Activated CD8-positive, alpha-beta T cell treated with anti-CD3 and anti-CD28 coated beads, Interleukin-2, amount 10 ng/mL, durations not matched to agents 7 days and 5 days (primary cell): ENCODE measurements at regions of chr16 and their contacts with region 1.

Region 1: DNA sequence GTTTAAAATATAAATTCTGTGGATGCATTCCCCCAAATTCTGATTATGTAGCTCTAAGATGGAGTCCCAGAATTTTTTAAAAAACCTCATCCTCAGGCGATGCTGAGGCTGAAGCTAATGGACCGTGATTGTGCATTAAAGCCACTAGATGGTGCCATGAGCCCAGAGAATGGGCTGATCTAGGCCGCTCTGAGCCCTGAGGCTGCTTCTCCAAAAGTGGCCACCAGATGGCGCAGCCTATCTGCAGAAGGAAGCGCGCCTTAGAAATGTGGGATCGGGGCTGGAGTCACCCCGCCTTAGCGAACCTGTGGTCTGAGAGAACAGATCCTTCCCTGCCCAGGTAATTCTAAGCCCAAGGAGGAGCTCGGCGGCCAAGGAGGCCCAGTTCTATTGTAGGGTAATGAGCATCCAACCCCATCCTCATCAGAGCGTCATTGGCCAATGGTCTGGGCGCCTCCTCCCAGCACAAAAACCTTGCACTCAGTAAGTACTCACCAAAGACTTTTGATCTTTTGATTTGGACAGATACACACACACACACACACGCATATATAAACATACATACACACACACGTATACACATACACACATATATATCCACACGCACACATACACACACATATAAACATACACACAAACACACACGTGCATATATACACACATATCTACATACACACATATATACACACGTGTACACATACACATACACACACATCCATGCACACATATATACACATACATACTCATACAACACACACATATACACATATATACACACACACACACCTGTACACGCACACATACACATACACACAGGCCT is 13.7 kb upstream of the MMP2 start:
- DNase-seq: peak; percentile 89
- ATAC-seq: peak; percentile 97
- H3K4me3 Mint-ChIP-seq: no peak overlapping the region
- H3K27ac Mint-ChIP-seq: no peak overlapping the region
- H3K4me1 Mint-ChIP-seq: no peaks in the 10 kb centered on the region
- H3K27me3 Mint-ChIP-seq: no peaks in the 10 kb centered on the region

Region 2: GRCh38 chr16:55398762-55399161 is 66.5 kb before region 1 on chr16:
- CTCF ChIA-PET with region 1: no interaction called
- POLR2A ChIA-PET with region 1: no interaction called
- DNase-seq: no peak
- ATAC-seq: no peak
- H3K4me3 Mint-ChIP-seq: no peak overlapping the region
- H3K27ac Mint-ChIP-seq: no peak overlapping the region
- H3K4me1 Mint-ChIP-seq: no peaks in the 10 kb centered on the region
- H3K27me3 Mint-ChIP-seq: no peaks in the 10 kb centered on the region

Region 3: GRCh38 chr16:55411231-55411630 is 54.1 kb before region 1 on chr16:
- CTCF ChIA-PET with region 1: no interaction called
- POLR2A ChIA-PET with region 1: no interaction called
- DNase-seq: no peak
- ATAC-seq: no peak
- H3K4me3 Mint-ChIP-seq: no peak overlapping the region
- H3K27ac Mint-ChIP-seq: no peak overlapping the region
- H3K4me1 Mint-ChIP-seq: no peaks in the 10 kb centered on the region
- H3K27me3 Mint-ChIP-seq: peaks cover 2% of the 10 kb centered on the region

Region 4: DNA sequence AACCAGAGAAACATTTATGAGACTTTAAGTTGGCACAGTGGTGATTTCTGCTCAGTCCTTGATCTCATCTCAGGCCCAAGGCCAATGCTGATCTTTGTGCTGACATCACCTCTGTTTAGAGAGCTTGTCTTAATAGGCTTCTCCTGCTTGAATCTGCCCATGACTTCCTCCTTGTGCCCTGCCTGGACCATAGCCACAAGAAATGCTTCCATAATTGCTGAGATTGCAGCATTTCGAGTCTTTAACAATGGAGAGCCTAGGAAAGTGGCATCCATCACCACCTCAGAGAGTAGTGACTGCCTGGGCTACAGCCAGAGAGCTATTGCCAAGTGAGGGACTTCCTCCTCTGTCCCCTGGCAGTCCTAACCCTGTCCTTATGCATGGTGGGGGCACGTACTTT is 11.4 kb before region 1 on chr16:
- CTCF ChIA-PET with region 1: interaction called, 13 read pairs
- POLR2A ChIA-PET with region 1: no interaction called
- DNase-seq: no peak
- ATAC-seq: no peak
- H3K4me3 Mint-ChIP-seq: no peak overlapping the region
- H3K27ac Mint-ChIP-seq: no peak overlapping the region
- H3K4me1 Mint-ChIP-seq: no peaks in the 10 kb centered on the region
- H3K27me3 Mint-ChIP-seq: no peaks in the 10 kb centered on the region

Region 5: DNA sequence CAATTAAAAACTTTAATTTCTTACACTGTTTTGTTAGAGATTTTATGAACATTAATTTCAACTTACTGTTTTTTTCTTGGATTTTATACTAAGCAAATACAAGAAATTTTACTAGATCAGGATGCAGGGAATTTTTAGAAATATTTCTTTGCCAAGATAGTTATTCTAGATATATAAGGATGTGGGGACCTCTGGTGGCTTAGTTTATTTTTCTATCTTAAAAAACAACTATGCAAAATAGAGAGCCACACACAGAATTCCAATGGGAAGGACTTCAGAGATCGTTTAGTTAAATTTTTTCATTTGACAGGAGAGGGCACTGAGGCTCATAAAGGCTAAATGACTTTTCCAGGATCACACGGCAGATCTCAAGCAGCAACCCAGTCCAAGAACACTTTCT is 78.2 kb after region 1 on chr16:
- CTCF ChIA-PET with region 1: interaction called, 11 read pairs
- POLR2A ChIA-PET with region 1: no interaction called
- DNase-seq: no peak
- ATAC-seq: no peak
- H3K4me3 Mint-ChIP-seq: no peak overlapping the region
- H3K27ac Mint-ChIP-seq: no peak overlapping the region
- H3K4me1 Mint-ChIP-seq: no peaks in the 10 kb centered on the region
- H3K27me3 Mint-ChIP-seq: no peaks in the 10 kb centered on the region

Region 6: GRCh38 chr16:55695595-55695994 is 230.3 kb after region 1 on chr16:
- CTCF ChIA-PET with region 1: interaction called, 92 read pairs
- POLR2A ChIA-PET with region 1: no interaction called
- DNase-seq: no peak
- ATAC-seq: no peak
- H3K4me3 Mint-ChIP-seq: no peak overlapping the region
- H3K27ac Mint-ChIP-seq: no peak overlapping the region
- H3K4me1 Mint-ChIP-seq: no peaks in the 10 kb centered on the region
- H3K27me3 Mint-ChIP-seq: peaks cover 2% of the 10 kb centered on the region

Region 7: DNA sequence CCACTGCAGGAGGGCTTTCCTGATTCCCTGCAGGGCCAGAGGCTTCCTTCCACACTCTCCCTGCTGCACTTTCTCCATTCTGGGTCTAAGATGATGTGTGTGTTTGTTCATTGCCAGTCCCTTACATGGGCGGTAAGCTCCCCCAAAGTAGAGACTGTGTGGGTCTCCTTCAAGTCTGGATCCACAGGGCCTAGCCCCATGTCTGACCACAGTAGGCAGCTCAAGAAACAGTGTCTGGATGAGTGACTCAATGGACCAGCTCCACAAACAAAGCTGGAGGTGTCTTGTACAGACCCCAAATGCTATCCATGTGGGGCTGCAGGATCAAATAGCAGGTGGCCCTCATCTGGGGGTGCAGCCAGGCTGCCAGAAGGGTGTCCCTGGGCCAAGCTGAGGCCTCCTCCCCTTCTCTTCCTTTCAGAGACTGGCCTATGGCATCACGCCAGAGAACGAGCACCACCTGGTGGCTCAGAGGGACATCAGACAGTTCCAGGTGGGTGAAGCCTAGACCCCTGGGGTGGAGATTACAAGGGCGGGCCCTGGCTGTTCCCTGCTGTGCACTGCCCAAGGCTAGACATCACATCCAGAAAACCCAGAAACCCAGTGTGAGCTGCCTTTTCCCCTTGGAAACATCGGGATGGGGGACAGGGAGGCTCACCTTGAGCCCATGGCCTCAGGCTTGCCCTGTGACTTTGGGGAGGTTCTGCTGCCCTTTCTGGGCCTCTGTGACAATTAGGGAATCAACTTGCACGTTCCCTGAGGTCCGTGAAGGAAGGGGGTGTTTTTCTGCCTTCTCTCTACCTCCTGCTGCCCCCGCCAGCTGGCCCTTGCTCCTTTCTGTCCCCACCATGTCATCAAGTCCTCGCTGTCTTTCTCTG is 236.4 kb after region 1 on chr16:
- CTCF ChIA-PET with region 1: interaction called, 92 read pairs
- POLR2A ChIA-PET with region 1: no interaction called
- DNase-seq: peak; percentile 48
- ATAC-seq: peak; percentile 81
- H3K4me3 Mint-ChIP-seq: no peak overlapping the region
- H3K27ac Mint-ChIP-seq: no peak overlapping the region
- H3K4me1 Mint-ChIP-seq: peaks cover 10% of the 10 kb centered on the region
- H3K27me3 Mint-ChIP-seq: peaks cover 2% of the 10 kb centered on the region